Calu3 (cell line): ENCODE measurements at regions of chr15 and their contacts with region 1.

Region 1: DNA sequence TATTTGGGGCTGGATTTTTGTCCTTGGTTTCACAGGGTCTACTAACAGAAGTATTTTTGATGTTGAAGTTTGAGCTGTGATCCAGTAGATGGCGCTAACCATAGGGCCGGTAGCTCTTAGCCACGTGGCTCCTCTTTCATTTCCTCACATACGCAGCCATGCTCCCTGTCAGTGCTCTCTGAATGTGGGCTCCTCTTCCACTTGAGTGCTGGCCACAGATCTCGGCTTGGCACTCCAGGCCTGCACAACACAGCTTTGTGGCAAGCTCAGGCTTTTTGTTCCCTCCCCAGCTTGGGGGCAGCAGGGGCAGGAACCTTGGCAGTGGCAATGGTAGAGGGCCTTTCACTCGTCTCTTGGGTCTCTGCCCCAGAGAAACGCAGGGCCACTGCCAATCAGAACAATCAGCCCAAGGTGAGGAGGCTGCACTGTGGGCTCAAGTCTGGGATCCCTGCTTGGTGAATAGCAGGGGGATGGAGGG is 18.6 kb upstream of the DNAAF4 start:
- DNase-seq: peak; percentile 38
- H3K4me3 Mint-ChIP-seq: no peak overlapping the region
- H3K27ac Mint-ChIP-seq: no peak overlapping the region
- H3K4me1 Mint-ChIP-seq: peaks cover 7% of the 10 kb centered on the region
- H3K27me3 Mint-ChIP-seq: peaks cover 32% of the 10 kb centered on the region
- CTCF ChIP-seq: peak; percentile 64

Region 2: GRCh38 chr15:55515991-55516780 is 10.4 kb before region 1 on chr15:
- CTCF ChIA-PET with region 1: interaction called, 10 read pairs
- intact Hi-C with region 1: no loop called
- DNase-seq: no peak
- H3K4me3 Mint-ChIP-seq: no peak overlapping the region
- H3K27ac Mint-ChIP-seq: no peak overlapping the region
- H3K4me1 Mint-ChIP-seq: no peaks in the 10 kb centered on the region
- H3K27me3 Mint-ChIP-seq: peaks cover under 1% of the 10 kb centered on the region
- CTCF ChIP-seq: no peak

Region 3: DNA sequence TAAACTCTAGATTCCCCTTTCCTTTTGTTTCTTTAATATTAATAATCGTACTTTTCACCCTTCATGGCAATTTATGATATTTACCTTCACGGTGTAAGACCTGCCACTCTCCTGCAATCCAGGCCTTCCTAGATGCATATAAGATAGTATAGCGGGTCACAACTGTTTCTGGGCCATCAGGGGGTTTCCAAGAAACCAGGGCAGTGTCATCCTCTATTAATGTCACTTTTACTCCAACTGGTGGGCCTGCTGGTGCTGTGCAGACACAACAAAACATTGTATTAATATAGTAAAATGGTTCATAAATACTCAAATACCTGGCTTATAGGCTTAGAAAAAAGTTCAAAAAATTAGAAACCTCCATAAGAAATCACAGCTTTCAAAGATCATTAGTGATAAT is 110.5 kb after region 1 on chr15:
- CTCF ChIA-PET with region 1: interaction called, 14 read pairs
- intact Hi-C with region 1: loop called (anchors 1 kb)
- DNase-seq: no peak
- H3K4me3 Mint-ChIP-seq: no peak overlapping the region
- H3K27ac Mint-ChIP-seq: no peak overlapping the region
- H3K4me1 Mint-ChIP-seq: no peaks in the 10 kb centered on the region
- H3K27me3 Mint-ChIP-seq: no peaks in the 10 kb centered on the region
- CTCF ChIP-seq: no peak

Region 4: DNA sequence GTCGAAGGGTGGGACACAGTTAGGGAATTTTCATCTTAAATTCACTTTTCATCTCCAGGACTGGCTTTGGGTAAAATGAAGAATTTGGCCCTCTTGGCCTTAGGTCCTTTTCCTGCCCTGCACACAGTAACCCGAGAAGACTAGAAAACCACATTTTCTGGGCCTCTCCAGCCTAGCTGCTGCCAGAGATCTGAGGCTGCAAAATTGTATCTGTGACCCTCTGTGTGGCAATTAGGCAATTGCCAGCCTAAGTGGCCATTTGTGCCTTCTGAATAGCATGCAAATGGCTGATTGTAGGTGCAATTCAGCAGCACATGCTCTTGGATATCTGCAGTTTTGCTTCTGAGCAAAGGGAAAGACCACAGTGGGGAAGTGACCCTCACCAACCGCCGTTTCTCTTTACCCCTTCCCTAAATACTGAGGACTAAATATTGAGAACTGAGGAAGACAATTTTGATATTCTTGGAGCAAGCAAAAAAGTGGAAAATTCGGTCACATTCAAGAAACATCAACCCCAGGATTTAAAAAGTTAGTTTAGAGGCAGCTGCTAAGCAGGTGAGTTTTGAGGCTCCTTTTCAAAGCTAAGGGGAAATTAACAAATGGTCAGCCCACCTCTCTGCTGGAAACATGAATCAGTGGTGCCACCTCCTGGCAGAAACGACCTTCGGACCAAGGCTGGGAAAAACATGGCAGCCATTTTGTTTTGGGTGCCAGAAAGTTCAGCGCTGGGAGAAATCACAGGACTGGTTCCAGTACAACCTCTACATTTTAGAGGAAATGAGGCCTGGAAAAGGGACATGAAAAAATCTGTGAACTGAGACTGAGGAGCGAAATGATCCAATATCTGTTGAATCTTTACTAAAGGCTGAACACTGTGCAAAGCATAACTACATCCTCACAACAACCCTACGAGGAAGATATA is 273.0 kb after region 1 on chr15:
- CTCF ChIA-PET with region 1: interaction called, 3 read pairs
- intact Hi-C with region 1: loop called (anchors 10 kb)
- DNase-seq: peak; percentile 82
- H3K4me3 Mint-ChIP-seq: no peak overlapping the region
- H3K27ac Mint-ChIP-seq: peak overlapping the region; percentile 47
- H3K4me1 Mint-ChIP-seq: peaks cover 18% of the 10 kb centered on the region
- H3K27me3 Mint-ChIP-seq: no peaks in the 10 kb centered on the region
- CTCF ChIP-seq: peak; percentile 77

Region 5: DNA sequence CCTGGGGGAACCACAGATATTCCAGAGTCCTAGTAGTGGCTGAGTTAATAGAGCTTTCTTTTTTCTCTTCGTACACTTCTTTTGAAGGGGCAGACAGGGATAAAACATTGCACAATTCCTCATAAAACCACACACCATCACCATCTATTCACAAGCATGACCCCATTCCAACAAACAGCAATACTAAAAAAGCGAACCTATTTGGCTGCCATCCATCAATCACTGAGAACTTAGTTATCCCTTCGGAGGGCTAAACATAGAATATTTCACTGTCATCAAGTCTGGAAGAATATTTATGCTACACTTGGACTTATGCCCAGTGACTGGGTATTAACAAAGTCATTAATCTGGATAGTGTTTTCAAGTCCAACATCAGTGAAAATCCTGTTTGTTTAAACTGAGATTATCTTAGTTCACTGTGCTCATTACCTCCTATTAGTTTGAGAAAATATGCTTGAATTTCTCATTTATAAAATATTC is 296.6 kb after region 1 on chr15:
- CTCF ChIA-PET with region 1: no interaction called
- intact Hi-C with region 1: no loop called
- DNase-seq: no peak
- H3K4me3 Mint-ChIP-seq: no peak overlapping the region
- H3K27ac Mint-ChIP-seq: no peak overlapping the region
- H3K4me1 Mint-ChIP-seq: no peaks in the 10 kb centered on the region
- H3K27me3 Mint-ChIP-seq: no peaks in the 10 kb centered on the region
- CTCF ChIP-seq: no peak